Posterior cingulate gyrus (tissue), 11 donors: ENCODE measurements at regions of chr17 and their contacts with region 1.

Region 1: GRCh38 chr17:20226814-20227482 is 217.8 kb downstream of the SPECC1 start:
- DNase-seq: peak; percentile 81 to 99 (median 92)

Region 2: DNA sequence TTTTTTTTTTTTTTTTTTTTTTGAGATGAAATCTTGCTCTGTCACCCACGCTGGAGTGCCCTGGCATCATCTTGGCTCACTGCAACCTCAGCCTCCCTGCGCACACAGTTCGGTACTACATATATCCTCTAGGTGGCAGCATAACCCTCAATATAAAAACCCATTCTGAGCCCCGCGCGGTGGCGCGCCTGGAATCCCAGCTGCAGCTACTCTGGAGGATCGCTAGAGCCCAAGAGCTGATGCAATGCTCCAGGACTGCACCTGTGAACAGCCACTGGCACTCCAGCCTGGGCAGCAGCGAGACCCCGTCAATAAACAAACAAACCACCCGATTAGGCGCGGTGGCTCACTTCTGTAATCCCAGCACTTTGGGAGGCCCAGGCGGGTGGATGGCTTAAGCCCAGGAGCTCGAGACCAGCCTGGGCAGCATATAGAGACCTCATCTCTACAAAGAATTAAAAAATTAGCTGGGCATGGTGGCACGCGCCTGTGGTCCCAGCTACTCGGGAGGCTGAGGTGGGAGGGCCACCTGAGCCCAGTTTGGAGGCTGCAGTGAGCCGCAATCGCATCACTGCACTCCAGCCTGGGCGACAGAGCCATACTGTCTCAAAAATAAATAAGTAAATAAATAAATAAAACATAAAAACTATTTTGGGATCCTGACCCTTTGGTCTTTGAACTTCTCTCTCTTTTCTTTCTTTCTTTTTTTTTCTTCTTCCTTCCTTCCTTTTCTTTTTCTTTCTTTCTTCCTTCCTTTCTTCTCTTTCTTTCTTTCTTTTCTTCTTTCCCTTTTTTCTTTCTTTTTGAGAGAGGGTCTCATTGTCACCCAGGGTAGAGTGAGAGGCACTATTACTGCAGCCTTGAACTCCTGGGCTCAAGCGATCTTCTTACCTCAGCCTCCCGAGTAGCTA is 233.9 kb before region 1 on chr17:
- intact Hi-C with region 1: loop called (anchors 5 kb)
- DNase-seq: peak; percentile 78 to 99 (median 89)

Region 3: GRCh38 chr17:20315821-20316220 is 88.9 kb after region 1 on chr17:
- intact Hi-C with region 1: loop called (anchors 2 kb)
- DNase-seq: peak in 1 of 10 donors; percentile 79